ENCODE measurements at regions of chr6 and their contacts with region 1.

Region 1: DNA sequence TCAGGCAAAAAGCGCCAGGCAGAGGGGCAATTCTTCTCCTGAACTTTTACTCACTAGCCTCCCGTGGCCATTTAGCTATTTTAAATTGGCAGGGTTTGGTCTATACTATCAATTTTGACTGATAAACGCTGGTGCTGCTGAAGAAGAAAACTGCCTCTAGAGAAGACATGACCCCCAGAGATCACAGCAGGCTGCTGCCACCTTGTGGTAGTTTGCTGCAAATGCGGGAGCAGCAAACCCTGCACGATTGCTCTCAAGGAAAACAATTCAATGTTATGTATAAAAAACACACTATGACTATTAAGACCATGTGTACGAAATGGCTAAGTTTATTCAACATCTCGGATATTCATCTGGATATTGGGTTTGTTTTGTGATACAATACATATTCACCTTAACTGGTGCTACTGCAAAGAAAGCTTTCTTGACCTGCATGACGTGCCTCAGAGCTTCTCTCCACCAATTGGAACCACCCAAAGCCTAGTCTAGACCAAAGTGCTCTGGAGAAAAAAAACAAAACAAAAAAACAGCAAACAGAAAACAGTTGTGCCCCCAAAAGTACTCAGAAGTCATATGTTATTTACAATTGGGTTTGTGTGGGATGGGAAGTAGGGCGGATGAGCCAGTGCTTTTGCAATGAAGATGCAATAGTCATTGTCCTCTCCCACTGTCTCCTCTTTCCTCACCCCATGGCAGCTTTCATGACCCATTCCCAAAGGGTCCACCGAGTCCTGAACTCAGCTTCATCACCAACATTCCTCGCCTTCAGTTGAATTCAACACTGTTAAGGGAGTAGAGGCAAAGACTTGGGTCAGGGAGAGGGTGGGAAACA is 19.6 kb upstream of the IL17F start:
- DNase-seq: peak; percentile 49
- H3K4me3 ChIP-seq: no peak overlapping the region
- H3K27ac ChIP-seq: no peak overlapping the region
- H3K27me3 ChIP-seq: no peaks in the 10 kb centered on the region
- CTCF ChIP-seq: peak; percentile 99

Region 2: DNA sequence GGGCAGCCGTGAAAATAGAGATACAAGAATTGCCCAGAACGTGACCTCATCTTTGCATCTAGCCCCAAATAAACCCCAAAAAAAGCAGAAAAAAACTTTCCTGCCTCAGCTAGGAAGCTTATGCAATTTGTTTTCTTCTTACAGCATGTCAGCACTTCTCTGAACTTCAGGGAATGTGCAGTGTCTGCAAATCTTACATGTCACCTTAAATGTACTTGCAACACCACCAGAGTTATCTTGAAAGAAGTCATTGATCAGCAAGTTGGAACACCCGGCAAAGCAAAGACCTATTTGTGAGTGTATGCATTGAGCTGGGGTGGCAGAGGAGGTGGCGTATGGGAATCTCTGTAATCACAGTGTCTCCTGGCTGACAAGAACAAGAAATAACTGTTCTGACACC is 299.9 kb before region 1 on chr6:
- CTCF ChIA-PET with region 1: no interaction called
- POLR2A ChIA-PET with region 1: no interaction called
- DNase-seq: no peak
- H3K4me3 ChIP-seq: no peak overlapping the region
- H3K27ac ChIP-seq: no peak overlapping the region
- H3K27me3 ChIP-seq: no peaks in the 10 kb centered on the region
- CTCF ChIP-seq: no peak

Region 3: DNA sequence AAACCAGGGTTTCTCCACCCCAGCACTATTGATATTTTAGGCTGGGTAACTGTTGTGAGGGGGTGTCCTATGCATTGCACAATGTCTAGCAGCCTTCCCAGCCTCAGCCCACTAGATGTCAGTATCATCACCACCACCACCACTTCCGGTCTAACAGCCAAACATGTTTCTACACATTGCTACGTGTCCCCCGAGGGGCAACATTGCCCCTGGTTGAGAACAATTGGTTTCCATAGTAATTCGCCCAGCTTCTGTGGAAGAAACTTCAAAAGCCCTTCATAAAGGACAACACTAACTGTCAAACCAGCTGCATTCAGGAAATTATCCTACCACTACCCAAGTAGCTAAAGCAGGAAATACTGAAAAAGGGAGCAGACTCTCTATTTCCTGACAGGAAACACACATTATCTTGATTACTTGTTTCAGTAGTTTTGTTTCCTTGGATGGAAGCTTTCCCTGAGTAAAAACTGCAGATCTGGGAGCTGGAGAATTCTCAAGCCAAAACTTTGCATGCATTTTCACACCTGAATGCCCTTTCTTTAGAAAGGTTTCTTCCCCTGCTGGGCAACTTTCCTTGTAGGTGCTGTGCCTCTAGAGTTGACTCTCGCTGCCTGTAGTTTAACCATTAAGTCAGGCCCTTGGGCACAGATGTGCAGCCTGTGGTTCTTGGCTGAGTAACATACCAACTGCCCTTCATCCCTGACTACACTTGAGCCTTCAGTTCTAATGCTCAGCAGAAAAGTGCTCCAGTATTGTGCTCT is 200.2 kb before region 1 on chr6:
- CTCF ChIA-PET with region 1: interaction called, 20 read pairs
- POLR2A ChIA-PET with region 1: no interaction called
- DNase-seq: no peak
- H3K4me3 ChIP-seq: no peak overlapping the region
- H3K27ac ChIP-seq: no peak overlapping the region
- H3K27me3 ChIP-seq: no peaks in the 10 kb centered on the region
- CTCF ChIP-seq: peak; percentile 55

Region 4: GRCh38 chr6:52162940-52163908 is 100.7 kb before region 1 on chr6:
- CTCF ChIA-PET with region 1: interaction called, 117 read pairs
- POLR2A ChIA-PET with region 1: no interaction called
- DNase-seq: peak; percentile 1
- H3K4me3 ChIP-seq: no peak overlapping the region
- H3K27ac ChIP-seq: no peak overlapping the region
- H3K27me3 ChIP-seq: no peaks in the 10 kb centered on the region
- CTCF ChIP-seq: peak; percentile 81

Region 5: DNA sequence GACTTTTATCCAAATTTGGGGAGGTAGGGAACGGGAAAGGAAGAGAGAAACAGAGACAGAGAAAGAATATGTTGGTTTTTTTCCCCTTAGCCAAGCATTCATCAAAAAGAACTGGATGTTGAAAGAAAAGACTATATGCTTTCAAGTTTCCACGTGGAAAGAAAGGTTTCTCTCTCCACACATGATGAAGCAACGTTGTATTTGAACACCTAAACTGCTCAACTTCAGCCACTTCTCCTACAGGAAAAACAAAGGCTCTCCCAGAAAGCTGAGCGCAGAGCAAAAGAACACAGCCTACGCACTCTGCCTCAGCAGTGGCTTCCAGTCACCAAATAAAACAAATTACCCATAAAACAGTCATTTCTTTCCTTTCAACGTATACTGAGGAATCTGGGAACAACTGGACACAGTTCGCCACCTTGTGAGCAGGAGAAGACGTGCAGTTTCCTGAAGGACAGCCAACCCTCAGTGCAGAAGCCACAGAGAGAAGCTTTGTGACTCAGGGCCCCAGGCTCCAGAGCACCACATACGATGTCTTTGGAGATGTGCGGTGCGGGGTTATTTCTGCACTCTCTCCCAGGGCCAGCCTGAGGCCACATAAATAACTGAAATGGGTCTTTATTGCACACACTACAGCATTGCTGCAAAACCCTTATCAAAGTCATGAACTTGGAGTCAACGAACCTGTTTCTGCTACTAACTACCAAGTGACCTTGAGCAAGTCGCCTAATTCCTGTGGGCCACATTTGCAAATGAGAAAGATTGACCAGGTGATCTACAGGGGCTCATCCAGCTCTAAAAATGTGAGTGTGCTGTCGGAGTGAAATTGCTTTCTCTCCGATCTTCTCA is 29.7 kb before region 1 on chr6:
- CTCF ChIA-PET with region 1: interaction called, 34 read pairs
- POLR2A ChIA-PET with region 1: no interaction called
- DNase-seq: peak; percentile 18
- H3K4me3 ChIP-seq: no peak overlapping the region
- H3K27ac ChIP-seq: no peak overlapping the region
- H3K27me3 ChIP-seq: peaks cover 2% of the 10 kb centered on the region
- CTCF ChIP-seq: peak; percentile 57

Region 6: GRCh38 chr6:52284460-52285176 is 20.7 kb after region 1 on chr6 and contains the start of gene MCM3:
- CTCF ChIA-PET with region 1: interaction called, 68 read pairs
- POLR2A ChIA-PET with region 1: no interaction called
- DNase-seq: peak; percentile 98
- H3K4me3 ChIP-seq: peak within 1 kb of the TSS; percentile 83
- H3K27ac ChIP-seq: no peak within 1 kb of the TSS
- H3K27me3 ChIP-seq: no peaks in the 10 kb centered on the region
- CTCF ChIP-seq: no peak
- polyA plus RNA-seq, gene MCM3: 28.4 and 33.6 TPM in 2 replicates

Region 7: GRCh38 chr6:52399511-52400312 is 135.8 kb after region 1 on chr6:
- CTCF ChIA-PET with region 1: interaction called, 37 read pairs
- POLR2A ChIA-PET with region 1: no interaction called
- DNase-seq: no peak
- H3K4me3 ChIP-seq: no peak overlapping the region
- H3K27ac ChIP-seq: no peak overlapping the region
- H3K27me3 ChIP-seq: no peaks in the 10 kb centered on the region
- CTCF ChIP-seq: peak; percentile 95